Activated B cell treated with CpG ODN at 0.5 μM for 24 hours (primary cell): ENCODE measurements at regions of chr19 and their contacts with region 1.

Region 1: DNA sequence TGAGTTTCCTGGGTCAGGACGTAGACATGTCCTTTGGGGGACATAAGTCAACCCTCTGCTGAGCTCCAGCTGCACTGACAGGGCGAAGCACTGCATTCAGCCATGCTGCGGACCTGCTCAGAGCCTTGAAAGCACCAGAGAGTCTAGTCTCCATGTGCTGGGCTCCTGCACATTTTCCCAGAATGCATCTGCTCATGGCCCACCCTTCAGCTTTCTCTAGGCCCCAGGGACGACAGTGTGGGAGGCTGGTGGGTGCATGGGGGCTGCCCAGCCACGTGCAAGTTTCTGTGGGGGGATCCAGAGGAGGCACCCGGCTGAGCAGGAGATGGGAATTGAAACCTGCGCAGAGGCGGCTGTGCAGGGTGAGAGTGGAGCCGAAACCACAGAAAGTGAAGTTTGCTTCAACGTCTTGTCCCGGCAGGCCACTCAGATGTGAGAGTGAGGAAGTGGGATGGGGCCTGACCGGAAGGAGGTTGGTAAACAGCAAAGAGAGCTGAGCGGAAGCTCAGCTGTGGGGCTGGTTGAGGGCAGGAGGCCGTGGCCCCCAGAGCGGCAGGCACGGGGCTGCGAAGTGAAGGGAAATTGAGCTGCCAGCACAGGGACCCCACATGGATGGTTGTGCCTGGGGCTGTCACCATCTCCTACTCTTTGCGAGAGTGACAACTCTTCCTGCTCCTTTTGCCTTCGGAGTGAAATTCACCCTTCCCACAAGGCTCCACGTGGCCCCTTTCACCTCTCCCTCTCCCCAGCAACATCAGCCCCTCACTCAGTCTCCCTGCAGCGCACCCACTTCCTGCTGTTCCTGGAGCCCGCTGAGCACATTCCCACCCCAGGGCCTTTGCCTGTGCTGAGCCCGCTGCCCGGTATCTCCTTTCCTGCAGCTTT is 11.8 kb downstream of the PGLS start:
- DNase-seq: peak; percentile 79
- ATAC-seq: peak; percentile 77
- H3K4me3 Mint-ChIP-seq: peak overlapping the region; percentile 76
- H3K27ac Mint-ChIP-seq: peak overlapping the region; percentile 94
- H3K4me1 Mint-ChIP-seq: peaks cover 67% of the 10 kb centered on the region
- H3K27me3 Mint-ChIP-seq: no peaks in the 10 kb centered on the region
- CTCF ChIP-seq: no peak

Region 2: DNA sequence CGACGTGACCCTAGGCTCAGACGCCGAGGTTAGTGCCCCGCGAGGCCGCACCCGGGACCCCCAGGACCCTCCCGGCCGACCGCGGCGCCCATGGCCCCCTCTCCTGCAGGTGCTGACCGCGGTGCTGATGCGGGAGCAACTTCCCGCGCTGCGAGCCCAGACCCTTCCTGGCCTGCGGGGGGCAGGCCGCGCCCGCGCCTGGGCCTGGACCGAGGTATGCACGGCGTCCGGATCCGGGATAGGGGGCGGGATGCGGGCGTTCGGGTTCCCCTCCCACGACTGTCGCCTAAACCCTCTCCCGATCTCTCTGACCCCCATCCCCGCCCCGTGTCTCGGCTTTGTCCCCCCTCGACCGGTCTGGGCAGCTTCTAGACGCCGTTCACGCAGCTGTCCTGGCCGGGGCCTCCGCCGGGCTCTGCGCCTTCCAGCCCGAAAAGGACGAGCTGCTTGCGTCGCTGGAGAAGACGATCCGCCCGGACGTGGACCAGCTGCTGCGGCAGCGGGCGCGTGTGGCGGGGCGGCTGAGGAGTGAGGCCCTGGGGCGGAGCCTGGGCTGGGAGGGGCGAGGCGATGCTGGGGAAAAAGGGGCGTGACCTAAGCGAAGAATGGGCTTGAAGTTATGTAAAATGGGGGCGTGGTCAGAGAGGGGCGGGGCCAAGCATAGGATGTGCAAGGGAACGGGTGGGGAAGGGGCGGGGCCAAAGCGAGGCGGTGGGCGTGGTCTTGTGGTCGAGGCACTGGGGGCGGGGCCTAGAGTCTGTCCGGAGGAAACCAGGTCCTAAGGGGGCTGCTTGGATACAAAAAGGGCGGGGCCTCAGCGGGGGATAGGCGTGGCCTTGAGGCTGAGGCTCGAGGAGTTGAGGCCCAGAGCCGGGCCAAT is 16.2 kb after region 1 on chr19:
- CTCF ChIA-PET with region 1: interaction called, 6 read pairs
- POLR2A ChIA-PET with region 1: interaction called, 305 read pairs
- intact Hi-C with region 1: loop called (anchors 1 kb)
- DNase-seq: peak; percentile 96
- ATAC-seq: peak; percentile 86
- H3K4me3 Mint-ChIP-seq: peak overlapping the region; percentile 84
- H3K27ac Mint-ChIP-seq: peak overlapping the region; percentile 90
- H3K4me1 Mint-ChIP-seq: peaks cover 56% of the 10 kb centered on the region
- H3K27me3 Mint-ChIP-seq: no peaks in the 10 kb centered on the region
- CTCF ChIP-seq: no peak

Region 3: GRCh38 chr19:17570791-17571190 is 47.6 kb after region 1 on chr19:
- CTCF ChIA-PET with region 1: no interaction called
- POLR2A ChIA-PET with region 1: no interaction called
- intact Hi-C with region 1: loop called (anchors 5 kb)
- DNase-seq: no peak
- ATAC-seq: no peak
- H3K4me3 Mint-ChIP-seq: no peak overlapping the region
- H3K27ac Mint-ChIP-seq: no peak overlapping the region
- H3K4me1 Mint-ChIP-seq: peaks cover 3% of the 10 kb centered on the region
- H3K27me3 Mint-ChIP-seq: no peaks in the 10 kb centered on the region
- CTCF ChIP-seq: no peak

Region 4: DNA sequence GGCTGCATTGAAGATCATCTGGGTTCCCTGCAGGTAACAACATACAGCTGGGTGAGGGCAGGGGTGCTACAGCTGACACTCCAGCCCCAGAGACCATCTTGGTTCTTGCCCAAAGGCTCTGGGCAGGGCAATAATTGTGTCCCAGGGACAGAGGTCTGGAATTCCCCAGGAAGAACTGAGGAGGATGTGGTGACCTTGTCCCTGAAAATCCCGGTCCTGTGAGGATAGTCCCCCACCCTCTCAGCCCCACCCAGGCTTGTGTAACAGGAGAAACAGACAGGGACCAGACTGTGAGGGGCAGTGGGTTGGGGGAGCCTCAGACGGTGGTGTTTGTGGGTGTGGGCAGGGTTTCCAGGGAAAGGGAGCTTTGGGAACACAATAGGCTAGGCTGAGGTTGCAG is 95.7 kb after region 1 on chr19:
- CTCF ChIA-PET with region 1: no interaction called
- POLR2A ChIA-PET with region 1: no interaction called
- intact Hi-C with region 1: no loop called
- DNase-seq: no peak
- ATAC-seq: no peak
- H3K4me3 Mint-ChIP-seq: no peak overlapping the region
- H3K27ac Mint-ChIP-seq: no peak overlapping the region
- H3K4me1 Mint-ChIP-seq: peaks cover 10% of the 10 kb centered on the region
- H3K27me3 Mint-ChIP-seq: peaks cover 30% of the 10 kb centered on the region
- CTCF ChIP-seq: no peak

Region 5: GRCh38 chr19:17847538-17848366 is 324.5 kb after region 1 on chr19 and contains the start of gene JAK3:
- CTCF ChIA-PET with region 1: no interaction called
- POLR2A ChIA-PET with region 1: interaction called, 14 read pairs
- intact Hi-C with region 1: no loop called
- DNase-seq: peak; percentile 79
- ATAC-seq: peak; percentile 86
- H3K4me3 Mint-ChIP-seq: peak within 1 kb of the TSS; percentile 94
- H3K27ac Mint-ChIP-seq: peak within 1 kb of the TSS; percentile 96
- H3K4me1 Mint-ChIP-seq: peaks cover 73% of the 10 kb centered on the region
- H3K27me3 Mint-ChIP-seq: no peaks in the 10 kb centered on the region
- CTCF ChIP-seq: no peak
- total RNA-seq, gene JAK3: 213 and 256 TPM in 2 replicates